GM18951 (cell line): ENCODE measurements at regions of chr10 and their contacts with region 1.

Region 1: GRCh38 chr10:68156373-68157185 is 47.3 kb downstream of the MYPN start:
- POLR2A ChIP-seq: no peak

Region 2: DNA sequence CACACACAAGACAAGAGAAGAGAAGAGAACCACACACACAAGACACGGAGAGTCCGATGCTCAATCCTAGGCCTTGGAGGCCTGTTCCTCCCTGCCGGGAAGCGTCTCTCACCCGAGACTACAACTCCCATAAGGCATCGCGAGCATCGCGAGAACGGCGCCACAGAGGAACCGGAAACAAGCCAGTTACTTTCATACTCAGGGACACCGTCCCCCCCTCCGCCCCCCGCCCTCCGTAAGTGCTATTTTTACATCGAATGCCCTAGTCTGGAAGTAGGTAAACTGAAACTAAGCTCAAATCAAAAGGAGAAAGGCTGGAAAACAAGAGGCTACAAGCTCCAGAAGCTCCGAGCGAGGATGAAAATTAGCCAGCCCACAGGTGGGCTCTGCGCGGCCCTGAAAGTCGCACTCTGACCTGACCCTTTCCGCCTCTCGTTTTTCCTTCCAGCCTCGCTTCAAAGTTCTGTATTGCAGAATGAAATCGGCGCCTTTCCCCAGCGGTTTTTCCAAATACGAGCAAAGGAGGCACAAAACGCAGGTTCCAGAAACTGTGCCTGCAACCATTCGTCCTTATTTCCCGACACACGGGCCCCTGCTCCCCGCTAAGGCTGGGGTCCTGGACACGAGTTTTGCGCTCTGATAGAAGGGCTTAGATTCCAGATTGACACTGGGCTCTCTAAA is 307.1 kb before region 1 on chr10:
- in situ Hi-C with region 1: loop called (anchors 25 kb)
- POLR2A ChIP-seq: peak; percentile 66

Region 3: DNA sequence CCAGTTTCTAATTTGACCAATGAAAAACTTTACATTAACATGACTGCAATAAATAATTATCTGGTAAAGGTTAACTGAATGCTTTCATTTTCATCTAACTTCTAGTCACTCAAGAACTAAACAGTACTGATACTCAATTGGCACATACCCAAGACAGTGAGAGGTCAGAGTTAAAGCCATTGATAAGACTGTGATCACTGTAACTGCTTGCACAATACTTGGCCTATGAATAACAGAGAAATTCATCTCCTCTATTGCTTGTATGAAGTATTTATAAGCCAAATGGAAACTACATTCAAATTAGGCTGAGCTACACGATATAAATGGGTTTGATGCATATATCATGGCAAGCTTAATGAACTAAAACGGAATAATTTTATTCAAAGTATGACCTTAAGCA is 124.5 kb before region 1 on chr10:
- in situ Hi-C with region 1: no loop called
- POLR2A ChIP-seq: no peak